ENCODE measurements at regions of chr14 and their contacts with region 1.

Region 1: DNA sequence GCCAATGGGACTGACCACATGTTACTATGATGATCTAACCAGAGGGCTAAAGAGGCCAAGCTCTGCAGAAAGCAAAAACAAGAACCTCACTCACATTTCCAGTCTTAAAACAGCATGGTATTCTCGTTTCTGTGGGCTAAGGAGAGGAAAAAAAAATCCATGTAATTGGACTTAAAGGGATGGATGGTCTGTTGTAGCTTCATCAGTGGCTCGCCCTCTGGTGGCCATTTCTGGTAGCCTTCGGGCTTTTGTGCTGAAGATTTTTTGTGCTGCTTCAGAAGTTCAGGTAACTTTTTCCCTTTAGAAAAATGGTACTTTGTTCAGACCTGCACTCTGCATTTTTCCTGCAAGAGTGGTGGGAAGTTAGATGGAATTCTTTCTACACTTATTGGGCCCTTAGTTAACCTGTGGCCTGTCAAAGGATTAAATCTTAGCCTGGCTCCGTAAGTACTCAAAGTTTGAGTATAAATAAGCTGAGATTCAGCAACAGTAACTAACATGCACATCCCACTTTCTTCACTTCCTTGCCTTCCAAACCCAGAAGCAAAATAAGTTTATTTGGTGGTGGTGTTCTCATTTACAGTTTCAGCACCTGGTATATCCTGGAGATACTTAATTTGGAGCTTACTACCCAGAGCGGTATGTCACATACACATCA is 22.3 kb downstream of the DCAF4 start:
- DNase-seq: no peak
- H3K4me3 ChIP-seq: no peak overlapping the region
- CTCF ChIP-seq: peak; percentile 75

Region 2: DNA sequence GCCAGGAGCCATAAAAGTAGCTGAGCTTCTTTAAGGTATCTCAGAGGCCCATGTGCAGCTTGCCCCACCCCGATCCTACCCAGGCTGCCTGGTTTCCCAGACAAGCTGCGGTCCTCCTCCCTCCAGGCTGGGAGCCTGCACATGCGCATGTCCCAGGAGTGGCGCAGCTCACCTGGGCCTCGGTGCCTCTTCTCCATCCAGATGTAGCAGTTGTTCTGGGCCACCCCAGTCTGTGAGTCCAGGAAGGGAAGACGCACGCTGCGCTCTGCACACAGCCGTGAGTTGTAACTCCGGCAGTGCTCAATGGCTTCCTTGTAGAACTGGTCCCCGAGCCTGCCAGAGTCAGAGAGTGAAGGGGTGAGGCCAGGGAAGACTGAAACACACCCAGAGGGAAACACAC is 177.0 kb before region 1 on chr14:
- CTCF ChIA-PET with region 1: no interaction called
- POLR2A ChIA-PET with region 1: no interaction called
- DNase-seq: no peak
- H3K4me3 ChIP-seq: no peak overlapping the region
- CTCF ChIP-seq: no peak

Region 3: DNA sequence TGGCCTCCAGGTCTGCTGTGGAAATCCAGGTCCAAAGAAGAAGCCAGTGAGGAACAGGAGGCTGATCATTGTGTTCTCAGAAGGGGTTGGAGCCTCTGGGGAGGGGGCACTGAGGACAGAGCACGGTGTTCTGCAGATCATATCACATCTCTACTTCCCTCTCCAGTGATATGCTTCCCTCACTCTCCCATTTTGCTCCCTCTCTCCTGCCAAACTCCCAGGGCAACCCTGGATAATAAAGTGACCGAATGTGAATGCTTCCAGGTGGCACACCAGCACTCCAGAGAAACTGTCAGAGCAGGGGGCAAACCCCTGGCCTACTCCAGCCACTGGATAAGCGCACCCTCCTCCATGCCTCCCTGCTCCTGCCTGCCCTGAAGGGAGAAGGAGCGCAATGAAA is 112.5 kb before region 1 on chr14:
- CTCF ChIA-PET with region 1: no interaction called
- POLR2A ChIA-PET with region 1: no interaction called
- DNase-seq: no peak
- H3K4me3 ChIP-seq: no peak overlapping the region
- CTCF ChIP-seq: no peak

Region 4: DNA sequence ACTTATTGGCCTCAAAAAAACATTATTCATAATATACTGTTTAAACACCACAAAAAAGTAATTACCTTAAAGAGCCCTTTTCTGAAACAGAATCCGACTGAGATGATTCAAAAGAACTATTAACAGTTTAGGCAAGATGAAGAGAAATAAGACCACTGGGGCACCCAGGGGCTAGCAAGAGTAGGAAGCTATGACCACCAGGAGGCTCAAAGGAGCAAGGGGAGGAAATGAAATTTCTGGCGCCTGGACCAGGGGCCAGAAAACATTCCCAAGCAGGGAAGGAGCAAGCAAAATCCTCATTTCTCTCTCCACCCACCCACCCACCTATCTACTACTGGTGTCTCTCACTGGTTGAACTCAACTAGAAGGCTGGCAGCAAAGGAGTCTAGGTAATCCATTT is 28.6 kb before region 1 on chr14:
- CTCF ChIA-PET with region 1: interaction called, 38 read pairs
- POLR2A ChIA-PET with region 1: no interaction called
- DNase-seq: no peak
- H3K4me3 ChIP-seq: no peak overlapping the region
- CTCF ChIP-seq: no peak

Region 5: GRCh38 chr14:72926292-72927028 is 22.1 kb before region 1 on chr14 and contains the start of gene DCAF4:
- CTCF ChIA-PET with region 1: interaction called, 38 read pairs
- POLR2A ChIA-PET with region 1: no interaction called
- DNase-seq: peak; percentile 89
- H3K4me3 ChIP-seq: peak within 1 kb of the TSS; percentile 95
- CTCF ChIP-seq: no peak

Region 6: DNA sequence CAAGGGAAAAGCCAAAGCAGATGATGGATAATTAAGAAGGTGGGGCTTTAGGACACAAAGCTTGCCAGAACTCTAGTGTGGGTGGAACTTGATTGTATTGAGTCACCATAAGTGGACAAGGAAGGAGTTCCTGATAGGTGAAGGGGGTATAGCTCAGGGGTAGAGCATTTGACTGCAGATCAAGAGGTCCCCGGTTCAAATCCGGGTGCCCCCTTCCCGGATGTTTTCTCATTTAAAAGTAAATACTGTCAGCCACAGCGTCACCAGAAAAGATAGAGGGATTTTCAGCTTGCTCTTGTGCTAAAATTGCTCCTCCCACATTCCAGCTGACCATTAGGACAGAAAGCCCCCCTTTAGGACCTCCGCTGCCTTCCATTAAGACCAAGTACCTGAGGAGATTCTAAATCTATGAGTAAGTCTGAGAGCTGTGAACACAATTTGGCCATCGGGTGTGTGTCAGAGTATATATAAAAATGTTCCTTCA is 14.3 kb after region 1 on chr14:
- CTCF ChIA-PET with region 1: interaction called, 62 read pairs
- POLR2A ChIA-PET with region 1: no interaction called
- DNase-seq: peak; percentile 19
- H3K4me3 ChIP-seq: no peak overlapping the region
- CTCF ChIP-seq: no peak

Region 7: DNA sequence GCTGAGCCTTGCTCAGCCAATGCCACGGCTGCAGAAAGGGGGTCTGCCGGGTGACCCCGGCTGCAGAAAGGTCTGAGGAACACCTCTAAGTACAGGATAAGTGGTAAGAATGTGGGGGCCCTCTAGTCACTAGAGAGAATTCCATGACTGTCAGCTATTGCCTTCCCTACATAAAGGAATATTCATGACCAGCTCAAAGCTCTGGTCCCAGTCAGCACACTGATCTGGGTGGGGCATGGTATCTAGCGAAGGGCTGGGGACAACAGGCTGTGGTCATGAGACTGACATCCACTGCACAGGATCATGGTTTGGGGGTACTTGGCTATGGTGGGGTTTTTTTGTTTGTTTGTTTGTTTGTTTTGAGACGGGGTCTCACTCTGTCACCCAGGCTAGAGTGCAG is 19.7 kb after region 1 on chr14:
- CTCF ChIA-PET with region 1: interaction called, 62 read pairs
- POLR2A ChIA-PET with region 1: no interaction called
- DNase-seq: no peak
- H3K4me3 ChIP-seq: no peak overlapping the region
- CTCF ChIP-seq: no peak

Region 8: DNA sequence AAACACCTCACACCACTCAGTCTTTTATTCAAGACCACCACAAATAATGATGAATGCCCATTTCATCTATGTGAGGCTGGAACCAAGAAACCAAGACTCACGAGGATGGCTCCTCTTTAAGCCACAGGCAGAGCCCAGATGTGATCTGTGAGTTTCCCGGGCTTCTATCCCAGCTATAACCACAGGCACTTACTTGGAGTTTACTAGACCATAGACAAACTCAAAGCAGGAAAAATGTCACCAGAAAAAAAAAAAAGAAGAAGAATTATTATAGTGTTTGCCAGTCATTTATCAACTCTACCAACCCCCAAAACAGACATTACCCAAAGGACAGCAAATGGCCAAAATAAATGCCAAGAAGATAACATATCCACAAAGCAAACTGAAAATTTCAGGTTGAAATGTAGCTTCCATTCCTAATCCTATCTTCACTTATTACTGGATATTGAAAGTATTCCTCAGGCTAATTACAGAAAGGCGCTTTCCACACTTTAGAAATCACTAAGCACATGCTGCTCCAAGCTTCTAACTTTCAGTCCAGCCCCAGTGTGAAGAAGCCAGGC is 33.6 kb after region 1 on chr14:
- CTCF ChIA-PET with region 1: interaction called, 13 read pairs
- POLR2A ChIA-PET with region 1: no interaction called
- DNase-seq: no peak
- H3K4me3 ChIP-seq: no peak overlapping the region
- CTCF ChIP-seq: no peak